ENCODE measurements at regions of chr1 and their contacts with region 1.

Region 1: GRCh38 chr1:156445789-156446263 is 54.7 kb downstream of the MEF2D start:
- ATAC-seq: peak; percentile 84 to 98 (median 92)
- H3K4me3 ChIP-seq: no peak overlapping the region
- H3K27ac ChIP-seq: no peak overlapping the region
- H3K4me1 ChIP-seq: no peaks in the 10 kb centered on the region

Region 2: GRCh38 chr1:156383023-156383422 is 62.8 kb before region 1 on chr1:
- in situ Hi-C with region 1: loop called (anchors 5 to 10 kb)
- ATAC-seq: peak; percentile 74 to 93 (median 88)
- H3K4me3 ChIP-seq: no peak overlapping the region
- H3K27ac ChIP-seq: no peak overlapping the region
- H3K4me1 ChIP-seq: peaks cover 9% of the 10 kb centered on the region in 2 donors

Measured in motor neuron (in vitro differentiated cells).